CD4-positive, alpha-beta T cell (primary cell): ENCODE measurements at regions of chr22 and their contacts with region 1.

Region 1: GRCh38 chr22:29766632-29767170 is at the start of gene ZMAT5:
- DNase-seq: peak; percentile 81 to 97 (median 88)
- ATAC-seq: peak; percentile 96
- H3K4me3 ChIP-seq: peak within 1 kb of the TSS; percentile 83
- H3K4me3 Mint-ChIP-seq: peak within 1 kb of the TSS; percentile 98
- H3K27ac ChIP-seq: peak within 1 kb of the TSS; percentile 73 to 78
- H3K27ac Mint-ChIP-seq: peak within 1 kb of the TSS; percentile 88
- H3K4me1 ChIP-seq: peaks cover 30% of the 10 kb centered on the region
- H3K4me1 Mint-ChIP-seq: peaks cover 34% of the 10 kb centered on the region
- H3K27me3 ChIP-seq: no peaks in the 10 kb centered on the region
- H3K27me3 Mint-ChIP-seq: no peaks in the 10 kb centered on the region
- CTCF ChIP-seq: no peak
- total RNA-seq, gene ZMAT5: 5.6 to 6.6 TPM

Region 2: DNA sequence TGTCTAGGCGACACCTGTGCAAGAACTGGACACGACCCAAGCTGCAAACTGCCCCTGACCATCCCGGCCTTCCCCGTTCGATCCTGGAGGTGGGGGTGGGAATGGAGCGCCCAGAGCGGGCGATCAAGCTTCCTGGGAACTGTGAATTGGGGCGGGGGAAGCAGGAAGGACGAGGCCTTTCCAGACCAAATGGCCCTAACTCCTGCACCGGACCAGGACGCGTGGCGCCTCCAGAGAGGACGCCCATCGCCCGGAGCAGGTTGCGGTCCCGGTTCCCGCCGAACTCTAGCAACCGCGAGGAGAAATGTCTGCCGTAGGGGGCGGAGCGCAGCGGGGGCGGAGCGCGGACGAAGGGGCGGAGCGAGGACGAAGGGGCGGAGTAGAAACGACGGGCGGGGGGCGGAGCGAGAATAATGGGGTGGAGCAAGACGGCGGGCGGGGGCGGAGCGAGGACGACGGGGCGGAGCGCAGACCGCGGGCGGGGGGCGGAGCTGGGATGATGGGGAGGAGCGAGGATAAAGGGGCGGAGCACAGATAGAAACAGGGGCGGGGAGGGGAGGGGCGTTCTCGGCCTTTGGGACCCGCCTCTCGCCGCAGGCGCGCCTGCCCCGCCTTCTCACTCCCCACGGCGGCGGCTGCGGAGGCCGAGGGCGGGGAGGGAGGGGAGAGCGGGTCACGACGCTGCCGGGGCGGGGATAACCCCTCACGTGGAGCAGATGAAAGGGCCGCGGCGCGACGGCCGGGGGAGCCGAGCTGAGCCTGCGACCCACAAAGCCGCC is 883.6 kb before region 1 on chr22 and contains the start of gene ZNRF3:
- CTCF ChIA-PET with region 1: no interaction called
- POLR2A ChIA-PET with region 1: no interaction called
- intact Hi-C with region 1: loop called in 1 of 2 experiments (anchors 5 kb)
- DNase-seq: peak; percentile 86 to 96 (median 92)
- ATAC-seq: peak; percentile 87
- H3K4me3 ChIP-seq: peak within 1 kb of the TSS; percentile 82
- H3K4me3 Mint-ChIP-seq: peak within 1 kb of the TSS; percentile 94
- H3K27ac ChIP-seq: no peak within 1 kb of the TSS
- H3K27ac Mint-ChIP-seq: peak within 1 kb of the TSS; percentile 74
- H3K4me1 ChIP-seq: peaks cover 16% of the 10 kb centered on the region
- H3K4me1 Mint-ChIP-seq: peaks cover 23% of the 10 kb centered on the region
- H3K27me3 ChIP-seq: peaks cover 4 to 7% of the 10 kb centered on the region in 2 experiments
- H3K27me3 Mint-ChIP-seq: peaks cover 23% of the 10 kb centered on the region
- CTCF ChIP-seq: no peak
- total RNA-seq, gene ZNRF3: 0.38 to 0.61 TPM

Region 3: GRCh38 chr22:29553351-29554224 is 213.1 kb before region 1 on chr22 and contains the start of gene THOC5:
- CTCF ChIA-PET with region 1: no interaction called
- POLR2A ChIA-PET with region 1: interaction called, 10 read pairs
- intact Hi-C with region 1: no loop called
- DNase-seq: peak; percentile 80 to 93 (median 86)
- ATAC-seq: peak; percentile 93
- H3K4me3 ChIP-seq: peak within 1 kb of the TSS; percentile 83
- H3K4me3 Mint-ChIP-seq: peak within 1 kb of the TSS; percentile 95
- H3K27ac ChIP-seq: peak within 1 kb of the TSS; percentile 54 to 84
- H3K27ac Mint-ChIP-seq: peak within 1 kb of the TSS; percentile 94
- H3K4me1 ChIP-seq: peaks cover 22% of the 10 kb centered on the region
- H3K4me1 Mint-ChIP-seq: peaks cover 15% of the 10 kb centered on the region
- H3K27me3 ChIP-seq: no peaks in the 10 kb centered on the region
- H3K27me3 Mint-ChIP-seq: no peaks in the 10 kb centered on the region
- CTCF ChIP-seq: no peak
- total RNA-seq, gene THOC5: 27.1 to 32.9 TPM

Region 4: DNA sequence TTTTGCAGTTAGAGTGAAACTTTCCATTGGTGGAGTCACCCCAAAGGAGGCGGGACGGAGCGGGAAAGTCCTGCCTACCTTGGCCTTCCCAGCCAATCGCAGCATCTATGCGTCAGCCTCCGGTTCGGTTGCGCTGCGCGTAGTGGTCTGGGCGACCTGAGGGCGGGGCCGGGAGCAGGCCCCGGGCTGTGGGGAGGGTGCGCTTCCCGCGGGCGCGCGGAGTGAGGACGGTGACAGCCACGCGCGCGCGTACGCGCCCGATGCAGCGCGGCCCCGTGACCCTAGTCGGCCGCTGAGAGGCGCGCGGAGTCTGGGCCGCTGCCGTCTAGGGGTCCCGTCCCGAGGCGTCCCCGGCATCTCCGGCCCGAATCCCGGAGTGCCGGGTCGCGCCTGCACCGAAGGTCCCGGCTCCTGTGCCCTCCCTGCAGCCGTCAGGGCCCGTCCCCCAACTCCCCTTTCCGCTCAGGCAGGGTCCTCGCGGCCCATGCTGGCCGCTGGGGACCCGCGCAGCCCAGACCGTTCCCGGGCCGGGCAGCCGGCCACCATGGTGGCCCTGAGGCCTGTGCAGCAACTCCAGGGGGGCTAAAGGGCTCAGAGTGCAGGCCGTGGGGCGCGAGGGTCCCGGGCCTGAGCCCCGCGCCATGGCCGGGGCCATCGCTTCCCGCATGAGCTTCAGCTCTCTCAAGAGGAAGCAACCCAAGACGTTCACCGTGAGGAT is 163.2 kb before region 1 on chr22 and contains the start of gene NF2:
- CTCF ChIA-PET with region 1: no interaction called
- POLR2A ChIA-PET with region 1: interaction called, 4 read pairs
- intact Hi-C with region 1: loop called (anchors 1 to 2 kb)
- DNase-seq: peak; percentile 96 to 100 (median 98)
- ATAC-seq: peak; percentile 97
- H3K4me3 ChIP-seq: peak within 1 kb of the TSS; percentile 82
- H3K4me3 Mint-ChIP-seq: peak within 1 kb of the TSS; percentile 98
- H3K27ac ChIP-seq: peak within 1 kb of the TSS; percentile 87 to 90
- H3K27ac Mint-ChIP-seq: peak within 1 kb of the TSS; percentile 96
- H3K4me1 ChIP-seq: peaks cover 33% of the 10 kb centered on the region
- H3K4me1 Mint-ChIP-seq: peaks cover 37% of the 10 kb centered on the region
- H3K27me3 ChIP-seq: no peaks in the 10 kb centered on the region
- H3K27me3 Mint-ChIP-seq: no peaks in the 10 kb centered on the region
- CTCF ChIP-seq: no peak
- total RNA-seq, gene NF2: 23.1 to 24.5 TPM

Region 5: GRCh38 chr22:29883045-29883774 is 116.5 kb after region 1 on chr22 and contains the start of gene MTMR3:
- CTCF ChIA-PET with region 1: no interaction called
- POLR2A ChIA-PET with region 1: interaction called, 3 read pairs
- intact Hi-C with region 1: loop called in 1 of 2 experiments (anchors 5 kb)
- DNase-seq: peak; percentile 69 to 96 (median 91)
- ATAC-seq: peak; percentile 75
- H3K4me3 ChIP-seq: peak within 1 kb of the TSS; percentile 96
- H3K4me3 Mint-ChIP-seq: peak within 1 kb of the TSS; percentile 96
- H3K27ac ChIP-seq: peak within 1 kb of the TSS; percentile 15 to 75
- H3K27ac Mint-ChIP-seq: peak within 1 kb of the TSS; percentile 87
- H3K4me1 ChIP-seq: peaks cover 22% of the 10 kb centered on the region
- H3K4me1 Mint-ChIP-seq: peaks cover 2% of the 10 kb centered on the region
- H3K27me3 ChIP-seq: no peaks in the 10 kb centered on the region
- H3K27me3 Mint-ChIP-seq: no peaks in the 10 kb centered on the region
- CTCF ChIP-seq: peak; percentile 51
- total RNA-seq, gene MTMR3: 57.8 to 60.6 TPM

Region 6: DNA sequence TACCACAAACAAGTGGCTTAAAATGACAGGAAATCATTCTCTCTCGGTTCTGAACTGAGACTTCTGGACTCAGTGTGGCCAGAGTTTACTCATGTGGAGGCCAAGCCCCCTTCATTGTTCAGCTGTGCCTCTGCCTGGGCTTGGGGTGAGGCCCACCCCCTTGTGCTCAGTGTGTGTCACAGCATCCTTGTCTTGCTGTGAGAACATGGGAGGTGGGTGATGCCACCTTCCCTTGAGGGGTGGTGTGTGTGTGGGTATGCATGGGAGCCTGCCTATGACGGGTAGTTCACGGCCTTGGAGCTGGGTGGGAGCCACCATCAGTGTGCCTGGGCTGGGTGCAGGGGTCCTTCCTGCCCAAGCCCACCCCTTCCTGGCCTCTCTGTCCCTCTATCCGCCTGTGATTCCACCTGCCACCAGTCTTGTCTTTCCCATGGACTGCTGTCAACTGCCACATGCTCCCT is 1100.1 kb after region 1 on chr22:
- CTCF ChIA-PET with region 1: no interaction called
- POLR2A ChIA-PET with region 1: no interaction called
- intact Hi-C with region 1: no loop called
- DNase-seq: peak in 1 of 14 experiments; percentile 7
- ATAC-seq: no peak
- H3K4me3 ChIP-seq: no peak overlapping the region
- H3K4me3 Mint-ChIP-seq: no peak overlapping the region
- H3K27ac ChIP-seq: no peak overlapping the region
- H3K27ac Mint-ChIP-seq: no peak overlapping the region
- H3K4me1 ChIP-seq: no peaks in the 10 kb centered on the region
- H3K4me1 Mint-ChIP-seq: no peaks in the 10 kb centered on the region
- H3K27me3 ChIP-seq: no peaks in the 10 kb centered on the region
- H3K27me3 Mint-ChIP-seq: no peaks in the 10 kb centered on the region
- CTCF ChIP-seq: no peak